ENCODE measurements at regions of chr22 and their contacts with region 1.

Region 1: DNA sequence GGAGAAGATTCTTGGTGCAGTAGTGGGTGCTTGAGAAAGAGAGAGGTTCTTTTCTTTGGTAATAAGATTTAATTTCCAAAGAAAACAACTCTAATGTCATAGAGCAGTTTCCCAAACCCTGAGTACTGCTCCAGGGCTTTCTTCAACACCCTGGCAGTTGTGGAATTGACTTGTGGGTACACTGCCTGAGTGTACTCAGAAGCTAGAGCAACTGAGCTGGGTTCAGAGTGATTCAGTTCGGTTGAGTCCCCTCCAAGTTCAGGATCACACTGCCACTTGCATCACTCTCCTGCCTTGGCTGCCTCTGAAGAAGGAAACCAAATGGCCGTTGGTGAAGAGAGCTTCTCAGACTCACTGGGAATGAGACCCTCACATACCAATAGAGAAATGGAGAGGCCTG is 5.3 kb downstream of the DMC1 start:
- DNase-seq: no peak
- H3K4me3 ChIP-seq: no peak overlapping the region
- H3K4me1 ChIP-seq: peaks cover 16% of the 10 kb centered on the region
- H3K27me3 ChIP-seq: no peaks in the 10 kb centered on the region

Region 2: DNA sequence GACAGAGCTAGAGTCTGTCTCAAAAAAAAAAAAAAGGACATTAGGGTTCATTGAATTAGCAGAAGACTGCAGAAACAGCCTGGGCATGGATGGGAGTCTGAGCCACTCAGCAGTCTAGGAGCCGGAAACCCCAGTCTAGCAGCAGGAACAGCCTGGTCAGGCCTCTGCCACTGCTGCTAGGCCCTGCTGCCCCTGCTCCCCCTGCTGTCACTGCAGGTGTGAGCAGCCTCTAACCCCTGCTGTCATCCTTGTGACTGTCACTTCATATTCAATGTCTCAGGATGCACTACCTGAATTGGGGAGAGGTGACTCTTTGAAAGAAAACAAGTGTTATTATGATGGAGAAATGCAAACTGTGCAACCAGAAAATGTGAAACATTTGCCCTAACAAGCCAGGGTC is 51.6 kb before region 1 on chr22:
- in situ Hi-C with region 1: no loop called
- DNase-seq: no peak
- H3K4me3 ChIP-seq: no peak overlapping the region
- H3K4me1 ChIP-seq: peaks cover 4% of the 10 kb centered on the region
- H3K27me3 ChIP-seq: no peaks in the 10 kb centered on the region

Region 3: GRCh38 chr22:38531251-38531938 is 33.3 kb before region 1 on chr22:
- in situ Hi-C with region 1: loop called (anchors 5 kb)
- DNase-seq: peak; percentile 29 to 31
- H3K4me3 ChIP-seq: no peak overlapping the region
- H3K4me1 ChIP-seq: peaks cover 12% of the 10 kb centered on the region
- H3K27me3 ChIP-seq: no peaks in the 10 kb centered on the region

Measured in HAP-1 (cell line).